ENCODE measurements at regions of chr4 and their contacts with region 1.

Region 1: GRCh38 chr4:55948726-55949474 is at the start of gene CEP135:
- ATAC-seq: peak; percentile 79 to 98 (median 96)
- H3K4me3 ChIP-seq: peak within 1 kb of the TSS; percentile 60 to 90 (median 75)
- H3K27ac ChIP-seq: peak within 1 kb of the TSS in 1 of 2 donors; percentile 76
- H3K4me1 ChIP-seq: peaks cover 16% of the 10 kb centered on the region in 2 donors
- total RNA-seq, gene CEP135: 2.2 to 12.1 (median 7.4) TPM

Region 2: DNA sequence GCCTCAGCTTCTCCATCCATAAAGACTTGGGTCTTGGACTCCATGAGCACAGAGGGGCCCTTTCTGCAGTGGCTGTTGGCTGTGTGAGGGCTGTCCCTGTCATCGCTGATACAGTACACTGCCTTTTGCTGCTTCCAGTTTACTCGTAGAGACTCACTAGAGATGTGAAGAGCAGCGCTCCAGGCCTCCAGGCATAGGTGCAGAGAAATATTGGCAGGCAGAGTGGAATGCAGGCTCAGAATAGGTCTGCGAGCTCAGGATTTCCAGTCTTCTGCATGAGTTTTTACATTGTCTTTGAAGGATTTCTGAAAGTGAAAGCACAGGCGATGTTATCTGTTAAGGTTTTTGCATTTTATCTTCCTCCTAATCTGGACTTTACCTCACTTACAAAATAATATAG is 341.0 kb after region 1 on chr4:
- in situ Hi-C with region 1: loop called in 2 of 9 experiments (anchors 25 kb)
- ATAC-seq: peak in 5 of 8 experiments; percentile 32 to 84 (median 63)
- H3K4me3 ChIP-seq: no peak overlapping the region
- H3K27ac ChIP-seq: no peak overlapping the region
- H3K4me1 ChIP-seq: peaks cover 0 to 12% of the 10 kb centered on the region in 2 donors

Region 3: GRCh38 chr4:56301181-56302076 is 352.5 kb after region 1 on chr4:
- in situ Hi-C with region 1: loop called in 4 of 9 experiments (anchors 25 kb)
- ATAC-seq: peak; percentile 84 to 99 (median 97)
- H3K4me3 ChIP-seq: no peak overlapping the region
- H3K27ac ChIP-seq: no peak overlapping the region
- H3K4me1 ChIP-seq: peaks cover 7 to 18% of the 10 kb centered on the region in 2 donors

Measured in motor neuron (in vitro differentiated cells).